ENCODE measurements at regions of chr1 and their contacts with region 1.

Region 1: DNA sequence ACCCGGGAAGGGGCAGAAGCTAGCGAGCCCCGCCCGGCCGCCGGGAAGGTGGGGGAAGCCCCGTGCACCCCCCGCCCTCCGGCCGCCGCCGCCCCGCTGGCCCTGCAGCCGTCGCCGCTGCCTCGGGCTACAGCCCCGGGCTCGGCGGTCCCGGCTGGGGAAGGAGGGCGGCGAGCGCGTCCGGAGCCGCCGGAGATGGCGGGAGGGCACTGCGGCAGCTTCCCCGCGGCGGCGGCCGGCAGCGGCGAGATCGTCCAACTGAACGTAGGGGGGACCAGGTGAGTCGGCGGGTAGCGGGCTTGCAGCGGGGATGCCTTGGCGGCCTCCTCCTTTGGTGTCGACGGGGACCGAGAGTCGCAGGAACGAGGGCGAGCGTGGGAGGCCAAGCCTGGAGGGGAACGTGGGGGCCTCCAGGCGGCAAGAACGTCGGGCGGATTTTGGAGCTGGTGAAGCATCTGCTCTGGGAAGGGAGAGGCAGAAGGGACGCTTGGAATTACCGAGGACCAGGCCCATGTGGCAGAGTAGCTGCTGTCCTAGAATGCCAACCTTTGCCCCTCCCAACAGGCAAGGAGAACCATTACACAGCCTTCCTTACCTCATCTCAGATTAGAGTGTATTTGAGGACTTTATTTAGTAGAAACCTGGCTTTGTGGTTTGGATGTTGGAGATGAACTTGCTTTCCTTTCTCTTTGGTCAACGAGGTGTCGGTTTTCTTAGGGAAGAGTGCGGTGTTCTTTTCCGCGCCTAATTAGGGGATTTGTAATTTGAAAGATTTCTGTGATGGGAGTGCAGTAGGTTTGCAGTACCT is 591 bp downstream of the KCTD3 start:
- DNase-seq: no peak
- ATAC-seq: peak; percentile 79
- H3K4me3 ChIP-seq: peak overlapping the region; percentile 76
- H3K27ac ChIP-seq: peak overlapping the region; percentile 89
- H3K4me1 ChIP-seq: peaks cover 9% of the 10 kb centered on the region; the same call in 1 of the 2 replicates
- H3K27me3 ChIP-seq: no peaks in the 10 kb centered on the region
- CTCF ChIP-seq: no peak
- EP300 ChIP-seq: no peak
- POLR2A ChIP-seq: peak; percentile 66
- RAD21 ChIP-seq: no peak

Region 2: DNA sequence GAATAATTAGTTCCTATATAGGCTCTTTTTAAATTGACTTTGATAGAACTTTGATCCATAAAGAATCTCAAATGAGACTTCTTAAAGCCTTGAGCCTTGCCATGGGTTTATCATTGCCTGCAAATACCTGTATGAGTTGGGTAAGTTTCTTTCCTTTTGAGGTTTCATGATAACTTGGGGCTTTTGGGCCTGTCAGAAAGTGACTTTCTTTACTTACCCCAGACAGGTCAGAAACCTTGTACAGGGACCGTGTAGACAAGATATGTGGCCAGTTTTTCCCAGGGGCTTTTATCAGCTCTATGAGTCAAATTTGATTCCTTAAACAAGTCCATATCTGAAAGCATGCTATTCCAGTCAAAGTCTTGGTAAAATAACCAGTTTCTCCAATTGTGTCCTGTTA is 16.7 kb after region 1 on chr1:
- CTCF ChIA-PET with region 1: interaction called, 5 read pairs
- POLR2A ChIA-PET with region 1: no interaction called
- RAD21 ChIA-PET with region 1: interaction called, 3 read pairs
- SMC1A ChIA-PET with region 1: interaction called, 6 read pairs
- in situ Hi-C with region 1: no loop called
- intact Hi-C with region 1: loop called (anchors 1 kb)
- DNase-seq: no peak
- ATAC-seq: peak; percentile 87
- H3K4me3 ChIP-seq: no peak overlapping the region
- H3K27ac ChIP-seq: peak overlapping the region; percentile 46; the same call in 1 of the 2 replicates
- H3K4me1 ChIP-seq: no peaks in the 10 kb centered on the region
- H3K27me3 ChIP-seq: no peaks in the 10 kb centered on the region
- CTCF ChIP-seq: no peak
- EP300 ChIP-seq: peak in 1 of 2 experiments; percentile 43; a peak in 1 of 4 replicates
- POLR2A ChIP-seq: no peak
- RAD21 ChIP-seq: no peak

Region 3: DNA sequence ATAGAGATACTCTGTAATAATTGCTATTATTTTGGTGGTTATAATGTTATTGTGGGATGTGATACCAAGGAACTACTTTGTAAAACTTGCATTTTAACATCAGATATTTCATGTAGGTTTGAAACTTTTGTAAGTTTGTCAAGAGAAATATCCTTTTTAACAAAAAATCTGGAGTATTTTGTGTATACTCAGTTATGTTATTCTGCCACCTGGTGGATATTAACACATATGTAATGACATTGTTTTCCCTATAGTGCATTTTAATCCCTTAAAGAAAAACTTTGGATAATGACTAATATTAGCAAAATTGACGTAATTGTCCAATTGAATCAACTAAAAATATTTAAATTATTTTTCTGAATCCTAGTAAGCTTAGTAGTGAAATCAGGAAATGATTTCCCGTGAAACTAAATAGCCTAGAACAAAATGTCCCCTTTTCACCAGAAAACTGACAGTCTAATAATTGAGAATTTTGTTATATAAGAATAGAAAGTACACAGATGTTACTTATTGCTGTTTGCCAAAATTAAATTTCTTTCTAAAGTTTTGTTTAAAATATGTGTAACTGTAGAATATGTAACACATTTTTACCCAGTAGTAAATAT is 39.0 kb after region 1 on chr1:
- CTCF ChIA-PET with region 1: interaction called, 9 read pairs
- POLR2A ChIA-PET with region 1: no interaction called
- RAD21 ChIA-PET with region 1: interaction called, 7 read pairs
- SMC1A ChIA-PET with region 1: interaction called, 17 read pairs
- in situ Hi-C with region 1: no loop called
- intact Hi-C with region 1: no loop called
- DNase-seq: no peak
- ATAC-seq: peak; percentile 62
- H3K4me3 ChIP-seq: no peak overlapping the region
- H3K27ac ChIP-seq: no peak overlapping the region
- H3K4me1 ChIP-seq: no peaks in the 10 kb centered on the region
- H3K27me3 ChIP-seq: no peaks in the 10 kb centered on the region
- CTCF ChIP-seq: peak in 2 of 3 experiments; percentile 9 to 36; a peak in 3 of 6 replicates
- EP300 ChIP-seq: no peak
- POLR2A ChIP-seq: no peak
- RAD21 ChIP-seq: peak; percentile 40

Region 4: DNA sequence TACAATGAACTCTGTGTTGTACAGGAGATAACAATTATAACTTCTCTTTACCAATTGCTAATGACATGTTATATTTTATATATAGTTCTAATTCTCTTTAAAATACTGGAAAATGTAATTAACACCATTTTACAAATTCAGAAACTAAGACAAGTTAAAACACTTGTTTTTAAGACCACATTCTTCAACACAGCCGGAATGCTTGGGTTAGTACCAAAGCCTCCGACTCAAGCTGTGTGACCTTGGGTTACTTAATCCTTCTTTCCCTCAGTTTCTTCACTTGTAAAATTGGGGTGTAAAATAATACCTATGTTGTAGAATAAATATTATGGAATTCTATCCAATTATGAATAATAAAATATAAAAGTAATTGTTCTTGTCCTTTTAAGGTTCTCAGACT is 476.8 kb after region 1 on chr1:
- CTCF ChIA-PET with region 1: no interaction called
- POLR2A ChIA-PET with region 1: no interaction called
- RAD21 ChIA-PET with region 1: no interaction called
- SMC1A ChIA-PET with region 1: no interaction called
- in situ Hi-C with region 1: no loop called
- intact Hi-C with region 1: no loop called
- DNase-seq: no peak
- ATAC-seq: no peak
- H3K4me3 ChIP-seq: no peak overlapping the region
- H3K27ac ChIP-seq: no peak overlapping the region
- H3K4me1 ChIP-seq: no peaks in the 10 kb centered on the region
- H3K27me3 ChIP-seq: no peaks in the 10 kb centered on the region
- CTCF ChIP-seq: no peak
- EP300 ChIP-seq: no peak
- POLR2A ChIP-seq: no peak
- RAD21 ChIP-seq: no peak

Measured in GM12878 (cell line).